ENCODE measurements at regions of chr10 and their contacts with region 1.

Region 1: DNA sequence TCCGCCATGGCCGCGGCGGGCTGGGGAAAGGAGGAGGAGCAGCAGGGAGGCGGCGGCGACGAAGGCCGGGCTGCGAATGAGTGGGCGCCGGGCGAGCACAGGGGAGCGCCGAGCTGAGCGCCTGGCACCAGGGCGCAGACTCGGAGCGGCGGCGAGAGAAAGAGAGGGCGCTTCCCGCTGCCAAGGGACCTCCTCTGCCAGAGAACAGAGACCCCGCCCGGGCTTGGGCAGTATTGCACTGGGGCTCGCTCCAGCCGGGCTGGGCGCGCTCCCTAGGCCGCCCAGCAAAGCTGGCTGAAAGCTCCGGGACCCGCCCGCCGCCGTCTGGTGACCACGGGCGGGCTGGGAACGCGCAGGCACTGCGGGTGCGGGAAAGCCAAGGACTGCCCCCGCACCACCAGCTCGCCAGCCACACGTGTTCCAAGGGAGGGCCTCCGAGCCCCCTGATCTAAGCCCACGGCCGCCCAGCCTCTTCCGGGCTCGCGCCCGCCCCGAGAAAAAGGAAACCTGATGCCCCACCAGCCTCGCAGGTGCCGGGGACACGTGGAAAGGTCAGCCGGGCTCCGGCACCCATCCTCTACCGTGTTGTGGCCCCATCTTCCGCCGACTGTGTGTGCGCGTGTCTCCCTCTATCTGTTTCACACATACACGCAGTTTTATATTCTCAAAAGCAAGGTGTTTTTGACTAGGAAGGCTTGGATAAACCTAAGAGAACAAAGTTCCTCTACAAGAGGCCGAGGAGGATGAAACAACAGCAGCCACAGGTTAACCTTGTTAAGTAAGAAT is at the start of gene CCDC6:
- DNase-seq: peak; percentile 97 to 100
- H3K4me3 ChIP-seq: peak within 1 kb of the TSS; percentile 93
- H3K4me3 Mint-ChIP-seq: peak within 1 kb of the TSS; percentile 99
- H3K27ac Mint-ChIP-seq: peak within 1 kb of the TSS; percentile 92
- H3K4me1 ChIP-seq: peaks cover 33% of the 10 kb centered on the region
- H3K4me1 Mint-ChIP-seq: peaks cover 45% of the 10 kb centered on the region
- H3K27me3 ChIP-seq: no peaks in the 10 kb centered on the region
- H3K27me3 Mint-ChIP-seq: no peaks in the 10 kb centered on the region
- CTCF ChIP-seq: peak; percentile 92 to 96
- total RNA-seq, gene CCDC6: 113 and 116 TPM in 2 replicates

Region 2: DNA sequence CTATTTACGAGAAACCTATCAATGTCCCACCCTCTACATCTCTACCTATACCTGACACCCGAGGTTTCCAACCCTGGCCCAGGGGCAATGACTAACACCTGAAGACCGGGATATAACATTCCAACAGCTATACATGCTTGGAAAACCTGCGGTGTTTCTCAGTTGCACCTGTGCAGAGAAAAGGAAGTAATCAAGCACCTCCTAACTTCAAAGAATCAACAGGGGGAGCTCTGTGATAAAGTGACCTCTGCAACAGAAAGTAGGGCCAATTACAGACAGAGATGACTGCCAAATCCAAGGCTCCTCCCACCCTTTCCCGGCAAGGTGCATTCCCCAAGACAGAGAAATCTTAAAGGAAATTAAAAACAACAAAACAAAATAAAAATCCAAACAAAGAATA is 41.5 kb before region 1 on chr10:
- CTCF ChIA-PET with region 1: interaction called, 34 read pairs
- POLR2A ChIA-PET with region 1: interaction called, 25 read pairs
- intact Hi-C with region 1: loop called (anchors 1 kb)
- DNase-seq: peak; percentile 60 to 75
- H3K4me3 ChIP-seq: no peak overlapping the region
- H3K4me3 Mint-ChIP-seq: no peak overlapping the region
- H3K27ac Mint-ChIP-seq: peak overlapping the region; percentile 39
- H3K4me1 ChIP-seq: no peaks in the 10 kb centered on the region
- H3K4me1 Mint-ChIP-seq: peaks cover 27% of the 10 kb centered on the region
- H3K27me3 ChIP-seq: no peaks in the 10 kb centered on the region
- H3K27me3 Mint-ChIP-seq: no peaks in the 10 kb centered on the region
- CTCF ChIP-seq: peak; percentile 73 to 86

Region 3: GRCh38 chr10:59887972-59888663 is 18.5 kb before region 1 on chr10:
- CTCF ChIA-PET with region 1: interaction called, 13 read pairs
- POLR2A ChIA-PET with region 1: interaction called, 4 read pairs
- intact Hi-C with region 1: no loop called
- DNase-seq: peak; percentile 46 to 60
- H3K4me3 ChIP-seq: no peak overlapping the region
- H3K4me3 Mint-ChIP-seq: no peak overlapping the region
- H3K27ac Mint-ChIP-seq: peak overlapping the region; percentile 52
- H3K4me1 ChIP-seq: peaks cover 19% of the 10 kb centered on the region
- H3K4me1 Mint-ChIP-seq: peaks cover 32% of the 10 kb centered on the region
- H3K27me3 ChIP-seq: no peaks in the 10 kb centered on the region
- H3K27me3 Mint-ChIP-seq: no peaks in the 10 kb centered on the region
- CTCF ChIP-seq: no peak

Region 4: GRCh38 chr10:59937720-59938119 is 31.1 kb after region 1 on chr10:
- CTCF ChIA-PET with region 1: no interaction called
- POLR2A ChIA-PET with region 1: no interaction called
- intact Hi-C with region 1: loop called (anchors 2 kb)
- DNase-seq: no peak
- H3K4me3 ChIP-seq: no peak overlapping the region
- H3K4me3 Mint-ChIP-seq: no peak overlapping the region
- H3K27ac Mint-ChIP-seq: no peak overlapping the region
- H3K4me1 ChIP-seq: peaks cover 19% of the 10 kb centered on the region
- H3K4me1 Mint-ChIP-seq: peaks cover 33% of the 10 kb centered on the region
- H3K27me3 ChIP-seq: no peaks in the 10 kb centered on the region
- H3K27me3 Mint-ChIP-seq: no peaks in the 10 kb centered on the region
- CTCF ChIP-seq: no peak

Region 5: DNA sequence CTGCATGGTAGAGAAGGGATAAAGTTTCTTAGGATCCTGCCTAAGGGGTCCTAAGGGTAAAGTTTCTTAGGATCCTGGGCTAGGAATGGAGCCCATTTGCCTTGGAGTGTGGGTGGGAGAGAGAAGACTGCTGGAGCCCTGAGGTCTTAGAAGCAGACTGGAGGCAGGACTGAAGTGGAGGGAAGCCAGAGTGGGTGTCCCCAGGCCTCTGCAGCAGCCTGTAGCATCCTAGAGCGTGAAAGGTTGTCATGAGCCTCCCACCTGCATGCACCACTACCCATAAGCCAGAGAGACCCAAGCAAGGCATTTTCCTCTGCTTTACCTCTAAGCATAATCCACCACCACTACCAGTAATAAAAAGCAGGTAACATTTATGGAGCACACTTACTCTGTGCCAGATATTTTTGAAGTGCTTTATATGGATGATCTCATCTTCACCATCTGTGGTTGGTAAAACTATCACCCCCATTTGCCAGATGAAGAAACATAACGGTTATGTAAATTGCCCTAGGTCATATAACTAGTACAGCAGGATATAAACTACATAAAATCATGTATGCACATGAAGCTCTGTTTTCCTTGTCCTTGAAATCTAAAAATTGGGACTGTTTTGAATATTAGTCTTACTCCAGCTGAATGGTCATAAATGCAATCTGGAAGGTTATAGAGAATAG is 103.2 kb after region 1 on chr10:
- CTCF ChIA-PET with region 1: interaction called, 11 read pairs
- POLR2A ChIA-PET with region 1: interaction called, 4 read pairs
- intact Hi-C with region 1: loop called (anchors 1 kb)
- DNase-seq: no peak
- H3K4me3 ChIP-seq: no peak overlapping the region
- H3K4me3 Mint-ChIP-seq: no peak overlapping the region
- H3K27ac Mint-ChIP-seq: no peak overlapping the region
- H3K4me1 ChIP-seq: no peaks in the 10 kb centered on the region
- H3K4me1 Mint-ChIP-seq: no peaks in the 10 kb centered on the region
- H3K27me3 ChIP-seq: no peaks in the 10 kb centered on the region
- H3K27me3 Mint-ChIP-seq: no peaks in the 10 kb centered on the region
- CTCF ChIP-seq: no peak

Region 6: DNA sequence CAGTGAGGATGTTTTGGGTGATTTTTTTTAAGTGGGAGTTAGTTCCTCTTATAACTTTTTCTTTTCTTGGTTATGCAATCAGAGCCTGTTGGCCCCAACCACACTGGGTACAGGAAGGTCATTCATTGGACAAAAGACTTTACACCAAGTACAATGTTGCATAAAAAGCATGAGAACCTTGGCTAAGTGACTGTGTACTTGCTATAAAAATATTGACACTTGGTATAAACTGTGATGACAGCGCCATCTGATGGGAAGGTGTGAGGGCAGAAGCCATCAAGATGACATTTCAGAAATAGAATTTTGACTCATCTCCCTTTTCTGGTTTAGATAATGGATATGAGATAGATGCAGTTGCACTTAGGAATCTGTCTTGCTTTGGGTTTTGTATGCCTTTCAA is 126.1 kb after region 1 on chr10:
- CTCF ChIA-PET with region 1: interaction called, 6 read pairs
- POLR2A ChIA-PET with region 1: interaction called, 6 read pairs
- intact Hi-C with region 1: loop called (anchors 1 kb)
- DNase-seq: peak; percentile 68 to 82
- H3K4me3 ChIP-seq: no peak overlapping the region
- H3K4me3 Mint-ChIP-seq: no peak overlapping the region
- H3K27ac Mint-ChIP-seq: no peak overlapping the region
- H3K4me1 ChIP-seq: peaks cover 11% of the 10 kb centered on the region; the same call in 1 of the 2 replicates
- H3K4me1 Mint-ChIP-seq: peaks cover 9% of the 10 kb centered on the region
- H3K27me3 ChIP-seq: no peaks in the 10 kb centered on the region
- H3K27me3 Mint-ChIP-seq: no peaks in the 10 kb centered on the region
- CTCF ChIP-seq: peak; percentile 79 to 86

Region 7: DNA sequence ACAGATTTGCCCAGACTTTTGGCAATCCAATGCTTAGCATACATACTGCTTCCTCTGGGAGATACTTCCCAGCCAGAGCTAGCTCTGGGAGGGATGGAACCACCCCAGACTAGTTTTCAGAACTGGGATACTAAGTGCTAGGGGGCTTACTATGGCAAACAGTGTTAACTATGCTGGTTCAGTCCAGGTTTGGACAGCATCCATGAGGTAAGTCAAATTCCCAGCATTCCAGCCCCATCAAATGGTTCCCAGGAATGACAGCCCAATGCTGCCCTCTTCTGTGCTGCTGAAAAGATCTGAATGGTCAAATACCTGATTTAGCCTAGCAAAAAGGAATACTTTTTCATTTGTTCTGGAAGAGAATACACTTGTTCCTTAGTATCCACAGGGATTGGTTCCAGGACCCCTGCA is 141.5 kb after region 1 on chr10:
- CTCF ChIA-PET with region 1: interaction called, 3 read pairs
- POLR2A ChIA-PET with region 1: no interaction called
- intact Hi-C with region 1: loop called (anchors 1 kb)
- DNase-seq: peak; percentile 81 to 83
- H3K4me3 ChIP-seq: no peak overlapping the region
- H3K4me3 Mint-ChIP-seq: no peak overlapping the region
- H3K27ac Mint-ChIP-seq: no peak overlapping the region
- H3K4me1 ChIP-seq: peaks cover 5% of the 10 kb centered on the region
- H3K4me1 Mint-ChIP-seq: no peaks in the 10 kb centered on the region
- H3K27me3 ChIP-seq: no peaks in the 10 kb centered on the region
- H3K27me3 Mint-ChIP-seq: no peaks in the 10 kb centered on the region
- CTCF ChIP-seq: peak; percentile 84 to 86

Region 8: DNA sequence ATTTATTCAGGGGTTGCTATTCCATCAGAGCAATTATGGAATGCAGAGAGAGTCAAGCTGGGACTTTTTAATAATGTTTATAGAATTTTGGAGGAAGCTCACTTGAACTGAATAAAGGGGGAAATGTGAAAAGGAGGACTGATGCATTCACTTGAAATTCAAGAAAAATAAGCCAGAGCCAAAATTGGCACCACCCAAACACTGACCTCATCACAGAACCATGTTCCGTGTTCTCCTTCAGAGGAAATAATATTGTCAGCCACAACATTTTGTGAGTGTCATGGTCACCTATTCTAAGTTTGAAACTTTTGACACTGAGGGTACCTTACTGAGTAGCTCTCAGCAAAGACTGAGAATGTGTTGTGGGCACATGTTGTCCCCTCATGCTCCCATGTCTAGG is 276.1 kb after region 1 on chr10:
- CTCF ChIA-PET with region 1: no interaction called
- POLR2A ChIA-PET with region 1: no interaction called
- intact Hi-C with region 1: no loop called
- DNase-seq: no peak
- H3K4me3 ChIP-seq: no peak overlapping the region
- H3K4me3 Mint-ChIP-seq: no peak overlapping the region
- H3K27ac Mint-ChIP-seq: no peak overlapping the region
- H3K4me1 ChIP-seq: peaks cover 3% of the 10 kb centered on the region; the same call in 1 of the 2 replicates
- H3K4me1 Mint-ChIP-seq: peaks cover 6% of the 10 kb centered on the region
- H3K27me3 ChIP-seq: no peaks in the 10 kb centered on the region
- H3K27me3 Mint-ChIP-seq: no peaks in the 10 kb centered on the region
- CTCF ChIP-seq: no peak

Measured in Caco-2 (cell line).